ENCODE measurements at regions of chr6 and their contacts with region 1.

Region 1: DNA sequence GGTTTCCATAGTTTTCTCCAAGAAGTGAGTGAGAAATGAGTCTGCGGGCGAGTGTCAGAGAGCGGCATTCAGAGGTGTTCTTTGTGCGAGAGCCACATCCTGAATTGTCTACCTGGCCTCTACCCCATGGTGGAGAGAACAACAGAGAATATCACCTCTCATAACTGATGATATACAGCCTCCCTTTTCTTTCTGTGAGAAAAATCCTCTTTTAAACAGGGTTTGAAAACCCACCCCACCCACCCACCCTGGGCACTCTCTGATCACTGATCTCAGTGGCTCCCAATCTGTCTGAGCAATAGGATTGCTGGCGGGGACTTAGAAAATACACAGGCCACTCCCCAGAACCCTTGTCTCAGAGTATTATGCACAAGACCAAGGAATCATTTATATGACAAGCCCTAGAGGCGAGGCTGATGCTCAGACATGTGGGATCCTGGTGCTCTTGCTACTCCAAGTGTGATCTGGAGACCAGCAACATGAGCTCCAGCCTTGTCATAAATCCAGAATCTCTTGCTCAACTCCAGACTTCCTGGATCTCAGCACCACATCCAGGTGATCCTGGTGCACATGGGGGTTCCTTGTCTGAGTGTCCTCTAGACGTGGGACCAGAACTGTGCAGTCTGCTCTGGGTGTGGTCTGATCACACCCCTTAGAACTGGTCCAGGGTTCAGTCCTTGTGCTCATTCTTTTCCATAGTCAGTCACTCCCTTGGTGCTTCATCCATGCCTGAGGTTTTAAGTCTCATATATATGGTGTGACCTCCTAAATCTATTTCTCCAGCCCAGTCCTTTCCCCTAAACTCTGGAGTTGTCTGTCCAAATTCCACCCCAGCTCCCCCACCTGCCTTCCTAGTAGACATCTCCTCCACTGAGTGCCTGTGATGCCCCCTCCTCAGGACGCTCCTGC is 5.3 kb downstream of the HLA-B start:
- DNase-seq: peak; percentile 24
- H3K4me3 Mint-ChIP-seq: no peak overlapping the region
- H3K27ac Mint-ChIP-seq: peak overlapping the region; percentile 36
- H3K4me1 Mint-ChIP-seq: peaks cover 41% of the 10 kb centered on the region
- H3K27me3 Mint-ChIP-seq: peaks cover 2% of the 10 kb centered on the region

Region 2: GRCh38 chr6:30769088-30769852 is 582.4 kb before region 1 on chr6:
- CTCF ChIA-PET with region 1: no interaction called
- POLR2A ChIA-PET with region 1: no interaction called
- DNase-seq: peak; percentile 72
- H3K4me3 Mint-ChIP-seq: peak overlapping the region; percentile 28
- H3K27ac Mint-ChIP-seq: peak overlapping the region; percentile 65
- H3K4me1 Mint-ChIP-seq: peaks cover 52% of the 10 kb centered on the region
- H3K27me3 Mint-ChIP-seq: peaks cover 7% of the 10 kb centered on the region

Region 3: GRCh38 chr6:30955367-30956042 is 396.1 kb before region 1 on chr6:
- CTCF ChIA-PET with region 1: no interaction called
- POLR2A ChIA-PET with region 1: no interaction called
- DNase-seq: peak; percentile 54
- H3K4me3 Mint-ChIP-seq: peak overlapping the region; percentile 42
- H3K27ac Mint-ChIP-seq: no peak overlapping the region
- H3K4me1 Mint-ChIP-seq: peaks cover 8% of the 10 kb centered on the region
- H3K27me3 Mint-ChIP-seq: peaks cover 80% of the 10 kb centered on the region

Region 4: DNA sequence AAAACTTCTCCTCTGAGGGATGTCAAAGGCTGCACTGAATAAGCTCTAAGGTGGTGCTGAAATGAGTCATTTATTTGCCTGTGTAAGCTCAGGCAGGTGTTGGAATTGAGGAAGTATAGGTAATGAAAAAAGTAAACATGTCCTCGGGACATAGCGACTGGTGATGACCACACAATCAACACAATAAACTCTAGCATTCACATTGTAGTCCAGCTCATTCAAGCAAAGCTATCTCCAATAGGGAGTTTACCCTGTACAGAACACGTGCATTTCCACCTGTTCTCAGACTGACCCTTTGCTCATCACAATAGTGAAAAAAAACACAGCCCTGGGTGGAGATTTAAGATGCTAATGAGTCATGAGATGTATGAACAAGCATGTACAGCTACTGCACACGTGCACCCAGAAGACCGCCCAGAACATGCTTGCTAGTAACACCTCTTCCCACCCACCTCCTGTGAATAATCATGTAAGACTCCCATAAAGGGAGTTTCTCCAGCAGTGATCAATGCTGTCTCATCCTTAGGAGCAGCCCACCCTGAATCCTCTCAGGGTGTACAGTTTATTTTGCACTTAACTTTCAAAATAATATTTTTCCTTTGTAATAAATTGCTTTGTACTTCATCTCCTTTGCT is 148.2 kb before region 1 on chr6:
- CTCF ChIA-PET with region 1: no interaction called
- POLR2A ChIA-PET with region 1: interaction called, 36 read pairs
- DNase-seq: peak; percentile 58
- H3K4me3 Mint-ChIP-seq: peak overlapping the region; percentile 86
- H3K27ac Mint-ChIP-seq: peak overlapping the region; percentile 96
- H3K4me1 Mint-ChIP-seq: peaks cover 65% of the 10 kb centered on the region
- H3K27me3 Mint-ChIP-seq: no peaks in the 10 kb centered on the region

Region 5: GRCh38 chr6:31271641-31272357 is 79.9 kb before region 1 on chr6 and contains the start of gene HLA-C:
- CTCF ChIA-PET with region 1: interaction called, 4 read pairs
- POLR2A ChIA-PET with region 1: interaction called, 66 read pairs
- DNase-seq: peak; percentile 94
- H3K4me3 Mint-ChIP-seq: peak within 1 kb of the TSS; percentile 96
- H3K27ac Mint-ChIP-seq: peak within 1 kb of the TSS; percentile 99
- H3K4me1 Mint-ChIP-seq: peaks cover 56% of the 10 kb centered on the region
- H3K27me3 Mint-ChIP-seq: peaks cover 14% of the 10 kb centered on the region
- total RNA-seq, gene HLA-C: 1,690 to 1,696 TPM